ENCODE measurements at regions of chr9 and their contacts with region 1.

Region 1: GRCh38 chr9:137034863-137035761 is 3.2 kb upstream of the FUT7 start:
- DNase-seq: peak; percentile 89
- ATAC-seq: peak; percentile 84

Region 2: GRCh38 chr9:136787690-136788400 is 247.3 kb before region 1 on chr9:
- intact Hi-C with region 1: loop called (anchors 1 kb)
- DNase-seq: peak; percentile 75
- ATAC-seq: no peak

Region 3: DNA sequence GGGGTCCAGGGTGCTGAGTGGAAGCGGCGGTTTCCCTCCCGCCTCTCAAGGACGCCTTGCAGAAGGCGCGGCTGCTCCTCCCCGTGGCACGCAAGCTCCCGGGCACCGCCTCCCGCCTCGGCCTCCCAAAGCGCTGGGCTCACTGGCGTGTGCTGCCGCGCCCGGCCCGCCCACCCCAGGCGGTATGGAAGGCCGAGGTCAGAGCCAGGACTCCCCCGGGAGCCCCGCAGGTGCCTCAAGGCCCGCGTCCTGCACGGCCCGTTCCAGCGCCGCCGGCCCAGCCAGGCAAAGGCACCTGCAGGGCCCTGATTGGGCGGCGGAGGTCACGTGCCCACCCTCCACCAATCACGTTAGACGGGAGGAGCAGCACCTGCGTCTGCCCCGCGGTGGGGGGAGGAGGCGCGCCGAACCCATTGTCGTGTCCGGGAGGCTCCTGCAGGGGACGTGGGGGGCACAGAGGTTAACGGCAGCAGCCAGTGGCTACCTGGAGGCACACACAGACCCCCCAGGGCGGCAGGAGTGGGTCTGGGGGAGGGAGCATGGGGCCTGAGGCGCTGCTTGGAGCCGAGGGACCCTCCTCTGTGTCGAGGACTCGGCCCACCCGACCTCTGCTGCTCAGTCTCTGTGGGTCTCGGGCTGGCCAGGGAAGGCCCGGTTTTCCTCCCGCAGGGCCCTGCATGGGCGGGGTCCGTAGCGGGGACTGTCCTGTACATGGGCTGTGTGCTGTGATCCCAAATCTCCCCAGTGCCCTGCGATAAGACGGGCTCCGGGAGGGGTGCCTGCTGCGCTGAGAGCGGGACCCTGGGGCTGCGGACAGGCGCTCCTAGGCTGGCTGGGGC is 85.1 kb before region 1 on chr9:
- intact Hi-C with region 1: loop called (anchors 2 kb)
- DNase-seq: peak; percentile 98
- ATAC-seq: peak; percentile 90

Measured in Right ventricle myocardium superior (tissue), 1 donor.